WTC11 (cell line): ENCODE measurements at regions of chr17 and their contacts with region 1.

Region 1: GRCh38 chr17:38563362-38564253 is 42.1 kb downstream of the SRCIN1 start:
- DNase-seq: peak; percentile 79
- ATAC-seq: peak; percentile 45
- H3K4me3 Mint-ChIP-seq: peak overlapping the region; percentile 71
- H3K27ac Mint-ChIP-seq: no peak overlapping the region
- H3K4me1 Mint-ChIP-seq: peaks cover 58% of the 10 kb centered on the region
- H3K27me3 Mint-ChIP-seq: peaks cover 95% of the 10 kb centered on the region
- CTCF ChIP-seq: no peak

Region 2: DNA sequence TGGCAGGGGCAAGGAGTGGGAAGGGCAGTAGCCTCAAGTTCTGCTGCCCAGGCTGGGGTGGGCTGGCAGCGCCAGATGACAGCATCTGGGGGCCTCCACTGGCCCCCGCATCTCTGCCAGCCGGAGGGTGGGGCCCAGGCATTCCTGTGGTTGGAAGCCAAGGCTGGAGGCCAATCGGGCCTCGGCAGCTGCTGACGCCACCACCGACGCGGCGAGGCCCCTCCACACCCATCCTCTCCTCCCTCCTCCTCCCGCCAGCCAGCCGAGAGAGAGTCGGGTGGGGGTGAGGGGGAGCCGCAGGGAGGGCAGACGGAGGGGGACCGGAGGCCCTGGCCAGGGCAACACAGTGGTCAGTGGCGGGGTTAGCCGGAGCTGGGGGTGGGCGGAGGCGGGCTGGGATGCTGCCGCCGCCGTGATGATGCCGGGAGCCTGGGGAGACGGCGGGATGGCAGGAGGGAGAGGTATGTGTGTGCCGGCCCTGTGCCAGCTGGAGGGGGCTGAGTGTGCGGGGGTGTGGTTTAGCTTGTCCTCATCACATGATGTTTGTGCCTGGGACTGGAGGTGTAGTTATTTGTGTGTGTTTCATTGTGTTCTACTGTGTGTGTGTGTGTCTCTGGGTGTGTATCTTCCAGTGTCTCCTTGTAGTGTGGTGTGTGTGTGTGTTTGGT is 98.8 kb before region 1 on chr17:
- CTCF ChIA-PET with region 1: no interaction called
- POLR2A ChIA-PET with region 1: no interaction called
- DNase-seq: no peak
- ATAC-seq: peak; percentile 34
- H3K4me3 Mint-ChIP-seq: no peak overlapping the region
- H3K27ac Mint-ChIP-seq: peak overlapping the region; percentile 87; the same call in 1 of the 2 replicates
- H3K4me1 Mint-ChIP-seq: peaks cover 12% of the 10 kb centered on the region
- H3K27me3 Mint-ChIP-seq: no peaks in the 10 kb centered on the region
- CTCF ChIP-seq: no peak

Region 3: GRCh38 chr17:38476544-38476943 is 87.1 kb before region 1 on chr17:
- CTCF ChIA-PET with region 1: no interaction called
- POLR2A ChIA-PET with region 1: no interaction called
- DNase-seq: no peak
- ATAC-seq: no peak
- H3K4me3 Mint-ChIP-seq: no peak overlapping the region
- H3K27ac Mint-ChIP-seq: peak overlapping the region; percentile 12
- H3K4me1 Mint-ChIP-seq: peaks cover 18% of the 10 kb centered on the region
- H3K27me3 Mint-ChIP-seq: no peaks in the 10 kb centered on the region
- CTCF ChIP-seq: no peak

Region 4: DNA sequence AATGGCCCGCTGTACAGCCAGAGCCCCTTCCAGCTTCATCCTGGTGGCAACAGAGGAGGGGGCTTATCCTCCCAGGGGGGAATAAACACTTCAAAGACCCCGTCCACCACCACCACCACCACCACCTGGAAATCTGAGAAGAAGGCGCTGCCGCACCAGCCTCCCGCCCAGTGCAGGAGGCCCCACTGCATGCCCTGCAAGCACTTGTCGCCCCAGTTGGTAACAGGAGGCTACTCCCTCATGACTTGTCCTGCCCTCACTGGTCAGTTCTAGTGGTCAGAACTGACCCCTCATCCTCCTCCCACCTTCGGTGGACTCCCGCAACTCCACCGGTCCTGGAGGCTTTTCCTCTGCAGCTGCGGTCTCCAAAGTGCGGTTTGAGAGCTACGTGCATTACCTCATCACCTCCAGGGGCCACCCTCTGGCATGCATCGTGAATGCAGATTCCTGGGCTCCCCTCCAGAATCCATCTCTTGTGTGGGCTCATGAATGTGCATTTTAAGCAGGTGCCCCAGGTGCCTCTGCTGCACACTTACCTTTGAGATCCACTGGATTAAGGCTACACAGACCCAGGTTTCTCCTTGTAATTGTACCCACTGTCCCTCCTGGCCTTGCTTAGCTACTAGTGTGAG is 29.6 kb before region 1 on chr17:
- CTCF ChIA-PET with region 1: interaction called, 341 read pairs
- POLR2A ChIA-PET with region 1: interaction called, 3 read pairs
- DNase-seq: no peak
- ATAC-seq: peak; percentile 27
- H3K4me3 Mint-ChIP-seq: no peak overlapping the region
- H3K27ac Mint-ChIP-seq: no peak overlapping the region
- H3K4me1 Mint-ChIP-seq: peaks cover 33% of the 10 kb centered on the region
- H3K27me3 Mint-ChIP-seq: peaks cover 53% of the 10 kb centered on the region
- CTCF ChIP-seq: no peak

Region 5: GRCh38 chr17:38578229-38579082 is 14.8 kb after region 1 on chr17:
- CTCF ChIA-PET with region 1: interaction called, 242 read pairs
- POLR2A ChIA-PET with region 1: interaction called, 6 read pairs
- DNase-seq: peak; percentile 64
- ATAC-seq: peak; percentile 79
- H3K4me3 Mint-ChIP-seq: peak overlapping the region; percentile 58
- H3K27ac Mint-ChIP-seq: no peak overlapping the region
- H3K4me1 Mint-ChIP-seq: peaks cover 54% of the 10 kb centered on the region
- H3K27me3 Mint-ChIP-seq: peaks cover 90% of the 10 kb centered on the region
- CTCF ChIP-seq: no peak

Region 6: DNA sequence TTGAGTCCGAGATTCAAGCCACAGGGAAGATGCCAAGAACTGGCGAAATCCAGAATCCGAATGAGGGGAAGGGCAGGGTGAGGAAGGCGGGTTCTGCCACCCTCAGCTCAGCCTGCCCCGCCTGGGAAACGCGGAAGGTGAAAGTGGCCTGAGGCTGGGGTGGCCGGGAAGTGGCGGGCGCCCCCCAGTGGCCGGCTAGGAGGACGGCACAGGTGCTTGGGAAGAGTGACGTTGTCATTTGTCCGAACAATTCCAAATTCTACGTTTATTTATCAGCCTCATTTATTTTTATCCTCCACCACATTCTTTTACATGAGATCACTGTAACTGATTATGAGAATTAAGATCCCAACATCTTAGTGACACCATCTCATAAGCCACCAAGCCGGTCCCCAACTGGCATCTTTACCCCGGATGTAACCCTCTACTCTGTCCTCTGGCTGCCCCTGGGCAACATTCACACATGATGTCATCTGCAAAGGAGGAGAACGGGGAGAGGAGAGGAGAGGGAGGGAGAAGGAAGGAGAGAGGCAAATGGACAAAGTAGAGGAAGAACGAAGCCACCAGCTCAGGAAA is 20.8 kb after region 1 on chr17:
- CTCF ChIA-PET with region 1: interaction called, 242 read pairs
- POLR2A ChIA-PET with region 1: interaction called, 6 read pairs
- DNase-seq: peak; percentile 78
- ATAC-seq: peak; percentile 60
- H3K4me3 Mint-ChIP-seq: 0 out of 2 replicates have a peak overlapping the region, but pooled peaks have one; percentile 14
- H3K27ac Mint-ChIP-seq: peak overlapping the region; percentile 36; the same call in 1 of the 2 replicates
- H3K4me1 Mint-ChIP-seq: peaks cover 59% of the 10 kb centered on the region
- H3K27me3 Mint-ChIP-seq: peaks cover 38% of the 10 kb centered on the region
- CTCF ChIP-seq: peak; percentile 97

Region 7: DNA sequence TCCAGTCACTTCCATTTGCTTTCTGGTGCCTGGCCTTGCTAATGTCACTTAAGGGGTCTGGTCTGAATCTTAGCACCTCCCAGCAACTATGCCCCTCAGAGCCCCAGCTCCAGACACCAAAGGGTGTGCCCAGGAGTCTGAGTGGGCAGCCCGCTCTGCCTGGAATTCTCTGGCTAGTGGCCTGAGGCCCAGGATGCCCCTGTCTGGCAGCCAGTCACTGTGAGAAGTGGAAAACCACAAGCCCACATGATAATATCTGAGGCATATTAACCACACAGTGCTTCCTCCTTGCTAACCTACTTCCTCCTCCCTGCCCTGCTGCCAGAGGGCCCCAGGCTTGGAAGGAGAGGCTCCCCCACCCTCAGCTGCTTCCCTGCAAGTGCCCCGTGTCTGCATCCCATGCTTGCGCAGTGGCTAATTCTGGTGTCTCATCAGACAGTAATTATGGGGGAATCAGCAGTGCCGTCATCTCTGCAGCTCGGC is 28.2 kb after region 1 on chr17:
- CTCF ChIA-PET with region 1: interaction called, 354 read pairs
- POLR2A ChIA-PET with region 1: no interaction called
- DNase-seq: no peak
- ATAC-seq: no peak
- H3K4me3 Mint-ChIP-seq: no peak overlapping the region
- H3K27ac Mint-ChIP-seq: no peak overlapping the region
- H3K4me1 Mint-ChIP-seq: peaks cover 69% of the 10 kb centered on the region
- H3K27me3 Mint-ChIP-seq: peaks cover 8% of the 10 kb centered on the region
- CTCF ChIP-seq: no peak

Region 8: GRCh38 chr17:38719943-38720641 is 156.5 kb after region 1 on chr17:
- CTCF ChIA-PET with region 1: interaction called, 10 read pairs
- POLR2A ChIA-PET with region 1: interaction called, 5 read pairs
- DNase-seq: peak; percentile 85
- ATAC-seq: peak; percentile 69
- H3K4me3 Mint-ChIP-seq: peak overlapping the region; percentile 54
- H3K27ac Mint-ChIP-seq: no peak overlapping the region
- H3K4me1 Mint-ChIP-seq: peaks cover 39% of the 10 kb centered on the region
- H3K27me3 Mint-ChIP-seq: peaks cover 12% of the 10 kb centered on the region
- CTCF ChIP-seq: no peak